IMR-90 (cell line): ENCODE measurements at regions of chr1 and their contacts with region 1.

Region 1: DNA sequence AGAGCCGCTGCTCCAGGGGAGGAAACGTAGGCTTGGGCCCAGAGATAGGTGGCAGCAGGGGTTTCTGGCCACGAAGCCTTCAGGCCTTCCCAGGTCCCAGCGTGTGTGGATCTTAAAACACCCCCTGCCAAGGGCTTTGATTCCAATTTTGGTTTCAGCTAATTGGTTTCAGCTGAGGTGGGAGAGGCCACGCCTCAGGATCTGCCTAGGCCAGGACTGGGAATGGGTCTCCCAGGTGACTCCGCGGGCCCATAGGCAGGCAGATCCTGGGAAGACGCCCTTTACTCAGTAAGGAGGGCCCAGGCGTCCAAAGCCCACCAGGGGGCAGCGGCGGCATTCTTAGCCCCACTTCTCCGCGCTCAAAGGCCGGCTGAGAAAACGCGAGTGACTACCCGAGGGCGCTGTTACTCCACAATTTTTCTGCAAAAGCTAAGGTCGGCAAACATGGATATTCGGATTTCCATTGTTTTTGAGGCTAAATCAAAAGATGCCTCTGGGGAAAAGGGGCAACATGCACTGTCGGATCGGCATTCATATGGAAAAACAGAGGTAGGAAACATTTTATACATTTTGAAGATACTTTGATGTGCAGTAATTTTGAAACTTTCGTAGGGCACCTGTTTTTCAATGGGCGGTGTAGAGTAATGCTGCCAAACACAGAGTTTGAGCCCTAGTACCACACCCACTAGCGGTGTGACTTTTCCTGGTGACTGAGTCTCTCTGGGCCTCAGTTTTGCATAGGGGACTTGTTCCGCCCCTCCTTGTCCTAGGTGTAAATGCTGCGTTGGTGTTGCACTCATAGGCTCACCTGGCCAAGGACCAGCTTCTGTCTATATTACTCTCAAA is 31.8 kb upstream of the BCL10 start:
- DNase-seq: peak; percentile 84
- ATAC-seq: peak; percentile 98
- H3K4me3 ChIP-seq: no peak overlapping the region
- H3K27ac ChIP-seq: peak overlapping the region; percentile 33; the same call in 1 of the 2 replicates
- H3K4me1 ChIP-seq: peaks cover 7% of the 10 kb centered on the region
- H3K27me3 ChIP-seq: no peaks in the 10 kb centered on the region
- CTCF ChIP-seq: peak; percentile 100; the same call in 1 of the 2 replicates
- POLR2A ChIP-seq: peak; percentile 65; the same call in 1 of the 2 replicates
- RAD21 ChIP-seq: peak; percentile 100

Region 2: DNA sequence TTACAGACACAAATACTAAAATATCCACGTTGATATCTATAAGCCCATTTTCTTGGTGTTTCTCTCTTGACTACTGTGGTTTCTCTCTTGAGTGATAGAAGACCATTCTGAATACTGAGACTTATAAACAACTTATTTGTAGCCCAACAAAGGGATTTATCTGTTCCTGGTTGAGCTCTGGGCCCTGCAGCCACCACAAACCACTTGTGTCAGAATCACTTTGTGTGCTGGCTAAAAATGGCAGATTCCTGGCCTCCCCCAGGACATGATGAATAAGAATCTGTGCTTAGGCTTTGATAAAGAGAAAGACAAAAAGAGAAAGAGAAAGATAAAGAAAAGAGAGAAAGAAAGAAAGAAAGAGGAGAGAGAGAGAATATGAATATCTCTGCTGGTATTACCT is 292.4 kb before region 1 on chr1:
- CTCF ChIA-PET with region 1: no interaction called
- POLR2A ChIA-PET with region 1: no interaction called
- dilution Hi-C with region 1: no loop called
- in situ Hi-C with region 1: no loop called
- intact Hi-C with region 1: no loop called
- DNase-seq: no peak
- ATAC-seq: no peak
- H3K4me3 ChIP-seq: no peak overlapping the region
- H3K27ac ChIP-seq: no peak overlapping the region
- H3K4me1 ChIP-seq: no peaks in the 10 kb centered on the region
- H3K27me3 ChIP-seq: peaks cover 12% of the 10 kb centered on the region
- CTCF ChIP-seq: no peak
- POLR2A ChIP-seq: no peak
- RAD21 ChIP-seq: no peak

Region 3: DNA sequence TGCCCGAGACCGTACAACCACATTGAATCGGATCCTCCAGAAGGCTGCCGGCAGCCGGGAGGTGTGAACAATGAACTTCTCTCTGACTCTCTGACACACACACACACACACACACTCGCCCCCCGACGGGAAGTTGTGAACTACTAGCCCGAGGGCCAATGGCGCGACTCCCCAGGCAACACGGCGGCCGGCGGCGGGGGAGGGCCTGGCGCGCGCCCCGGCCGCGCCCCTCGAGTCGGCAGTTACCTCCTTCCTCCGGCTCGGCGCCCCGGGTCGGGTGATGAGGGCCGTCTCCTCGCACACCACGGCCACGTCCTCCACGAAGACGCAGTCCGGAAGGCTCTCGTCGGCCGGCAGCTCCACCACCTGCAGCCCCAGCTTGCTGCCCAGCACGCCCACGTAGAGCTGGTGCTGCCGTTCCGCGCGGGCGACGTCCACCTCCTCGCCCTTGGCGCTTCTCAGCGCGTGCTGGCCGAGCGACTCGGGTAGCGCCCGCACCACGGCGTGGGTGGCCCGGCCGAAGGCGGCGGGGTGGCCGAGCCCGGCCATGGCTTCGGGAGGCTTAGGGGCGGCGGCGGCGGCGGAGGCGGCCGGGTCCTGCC is 156.4 kb after region 1 on chr1:
- CTCF ChIA-PET with region 1: interaction called, 7 read pairs
- POLR2A ChIA-PET with region 1: no interaction called
- dilution Hi-C with region 1: no loop called
- in situ Hi-C with region 1: no loop called
- intact Hi-C with region 1: loop called (anchors 2 kb)
- DNase-seq: peak; percentile 73
- ATAC-seq: peak; percentile 80
- H3K4me3 ChIP-seq: peak overlapping the region; percentile 95
- H3K27ac ChIP-seq: peak overlapping the region; percentile 92
- H3K4me1 ChIP-seq: peaks cover 7% of the 10 kb centered on the region
- H3K27me3 ChIP-seq: no peaks in the 10 kb centered on the region
- CTCF ChIP-seq: no peak
- POLR2A ChIP-seq: peak; percentile 47; the same call in 1 of the 2 replicates
- RAD21 ChIP-seq: no peak; the same call in 1 of the 2 replicates

Region 4: GRCh38 chr1:85576642-85577418 is 268.6 kb after region 1 on chr1:
- CTCF ChIA-PET with region 1: interaction called, 3 read pairs
- POLR2A ChIA-PET with region 1: no interaction called
- dilution Hi-C with region 1: no loop called
- in situ Hi-C with region 1: loop called (anchors 5 kb)
- intact Hi-C with region 1: loop called (anchors 1 kb)
- DNase-seq: peak; percentile 88
- ATAC-seq: peak; percentile 27
- H3K4me3 ChIP-seq: peak overlapping the region; percentile 87
- H3K27ac ChIP-seq: peak overlapping the region; percentile 96
- H3K4me1 ChIP-seq: peaks cover 12% of the 10 kb centered on the region
- H3K27me3 ChIP-seq: no peaks in the 10 kb centered on the region
- CTCF ChIP-seq: peak; percentile 64
- POLR2A ChIP-seq: peak; percentile 41; the same call in 1 of the 2 replicates
- RAD21 ChIP-seq: peak; percentile 39; the same call in 1 of the 2 replicates

Region 5: DNA sequence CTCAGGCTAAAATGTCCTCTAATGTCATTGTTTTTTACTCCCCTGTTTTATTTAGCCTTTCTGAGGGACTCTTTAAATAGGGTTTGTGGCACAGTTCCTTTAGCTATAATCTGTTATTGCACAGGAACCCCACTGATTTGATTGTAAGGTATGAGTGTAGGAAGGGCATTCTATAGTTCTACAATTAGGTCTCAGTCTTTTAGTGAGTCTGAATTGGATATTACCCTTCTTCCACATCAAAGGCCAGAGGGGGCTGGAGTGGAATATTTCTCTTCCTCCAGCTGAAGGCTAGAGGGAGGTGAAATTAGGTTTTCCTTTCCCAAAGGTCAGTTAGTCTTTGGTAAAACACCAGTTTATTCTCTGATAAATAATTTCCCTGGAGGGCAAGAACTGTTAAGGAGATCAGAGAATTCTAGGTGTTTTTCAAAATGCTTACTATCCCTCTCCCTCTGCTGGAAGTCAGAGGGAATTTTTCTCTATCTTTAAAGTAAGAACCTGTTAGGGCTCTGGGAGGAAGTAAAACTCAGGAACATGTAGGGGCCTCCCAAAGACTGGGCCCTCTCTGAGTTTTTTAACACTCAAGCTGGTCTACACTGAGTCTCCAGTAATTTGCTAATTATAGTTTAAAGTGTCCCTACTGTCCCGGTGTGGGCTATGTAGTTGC is 576.3 kb after region 1 on chr1:
- CTCF ChIA-PET with region 1: no interaction called
- POLR2A ChIA-PET with region 1: no interaction called
- dilution Hi-C with region 1: no loop called
- in situ Hi-C with region 1: loop called (anchors 10 kb)
- intact Hi-C with region 1: loop called (anchors 1 kb)
- DNase-seq: peak; percentile 48
- ATAC-seq: peak; percentile 98
- H3K4me3 ChIP-seq: no peak overlapping the region
- H3K27ac ChIP-seq: no peak overlapping the region
- H3K4me1 ChIP-seq: no peaks in the 10 kb centered on the region
- H3K27me3 ChIP-seq: no peaks in the 10 kb centered on the region
- CTCF ChIP-seq: peak; percentile 65
- POLR2A ChIP-seq: no peak
- RAD21 ChIP-seq: peak; percentile 56